ENCODE measurements at regions of chr1 and their contacts with region 1.

Region 1: GRCh38 chr1:175221666-175222175 is 29.1 kb upstream of the KIAA0040 start:
- DNase-seq: peak; percentile 29
- ATAC-seq: no peak
- H3K4me3 ChIP-seq: no peak overlapping the region
- H3K27ac ChIP-seq: no peak overlapping the region
- H3K4me1 ChIP-seq: peaks cover 53% of the 10 kb centered on the region
- H3K27me3 ChIP-seq: no peaks in the 10 kb centered on the region
- CTCF ChIP-seq: peak; percentile 26; the same call in 1 of the 2 replicates

Region 2: GRCh38 chr1:175154629-175155472 is 66.9 kb before region 1 on chr1:
- CTCF ChIA-PET with region 1: interaction called, 10 read pairs
- POLR2A ChIA-PET with region 1: no interaction called
- intact Hi-C with region 1: loop called (anchors 2 kb)
- DNase-seq: peak; percentile 82
- ATAC-seq: peak; percentile 16; the same call in 1 of the 2 replicates
- H3K4me3 ChIP-seq: no peak overlapping the region
- H3K27ac ChIP-seq: no peak overlapping the region
- H3K4me1 ChIP-seq: peaks cover 29% of the 10 kb centered on the region
- H3K27me3 ChIP-seq: no peaks in the 10 kb centered on the region
- CTCF ChIP-seq: peak; percentile 78

Region 3: GRCh38 chr1:175169305-175170018 is 52.3 kb before region 1 on chr1:
- CTCF ChIA-PET with region 1: no interaction called
- POLR2A ChIA-PET with region 1: no interaction called
- intact Hi-C with region 1: loop called (anchors 1 kb)
- DNase-seq: peak; percentile 88
- ATAC-seq: peak; percentile 92
- H3K4me3 ChIP-seq: peak overlapping the region; percentile 30; the same call in 1 of the 2 replicates
- H3K27ac ChIP-seq: peak overlapping the region; percentile 98
- H3K4me1 ChIP-seq: peaks cover 45% of the 10 kb centered on the region
- H3K27me3 ChIP-seq: no peaks in the 10 kb centered on the region
- CTCF ChIP-seq: no peak

Region 4: DNA sequence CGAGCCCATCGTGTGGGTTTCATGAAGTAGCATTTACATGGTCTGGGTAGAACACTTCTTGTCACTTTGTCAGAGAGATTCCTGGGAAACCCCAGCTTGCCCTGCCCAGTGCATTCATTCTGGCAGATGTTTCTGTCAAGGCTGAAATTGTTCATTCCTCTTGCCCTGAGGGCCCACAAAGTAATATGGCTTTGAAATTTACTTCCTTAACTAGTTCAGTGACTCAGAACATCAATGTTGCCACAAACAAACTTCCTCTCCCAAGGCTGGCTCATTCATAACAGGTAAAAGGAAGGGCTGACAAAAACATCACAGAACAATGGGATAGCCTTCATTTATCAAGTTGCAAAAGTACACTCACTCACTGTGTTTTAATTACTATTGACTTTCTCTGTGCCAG is 24.2 kb before region 1 on chr1:
- CTCF ChIA-PET with region 1: no interaction called
- POLR2A ChIA-PET with region 1: no interaction called
- intact Hi-C with region 1: loop called (anchors 1 kb)
- DNase-seq: peak; percentile 93
- ATAC-seq: peak; percentile 56
- H3K4me3 ChIP-seq: no peak overlapping the region
- H3K27ac ChIP-seq: peak overlapping the region; percentile 99
- H3K4me1 ChIP-seq: peaks cover 49% of the 10 kb centered on the region
- H3K27me3 ChIP-seq: no peaks in the 10 kb centered on the region
- CTCF ChIP-seq: no peak

Region 5: DNA sequence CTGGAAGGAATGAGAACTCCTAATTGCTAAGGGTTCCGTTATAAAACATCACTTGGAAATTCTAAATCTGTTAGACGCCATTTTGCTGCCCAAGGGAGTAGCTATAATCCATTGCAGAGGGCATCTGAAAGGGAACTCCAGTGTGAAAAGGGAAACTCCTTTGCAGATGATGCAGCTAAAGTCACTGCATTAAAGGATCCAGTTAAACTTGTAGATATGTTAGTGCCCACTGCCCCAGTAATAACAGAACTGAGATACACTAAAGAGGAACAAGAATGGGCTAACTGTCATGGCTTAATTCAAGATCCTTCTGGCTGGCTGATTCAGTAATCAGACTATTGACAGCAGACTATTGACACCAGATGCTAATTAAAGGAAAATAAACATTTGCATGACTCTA is 52.6 kb after region 1 on chr1:
- CTCF ChIA-PET with region 1: no interaction called
- POLR2A ChIA-PET with region 1: no interaction called
- intact Hi-C with region 1: loop called (anchors 10 kb)
- DNase-seq: no peak
- ATAC-seq: no peak
- H3K4me3 ChIP-seq: no peak overlapping the region
- H3K27ac ChIP-seq: no peak overlapping the region
- H3K4me1 ChIP-seq: peaks cover 6% of the 10 kb centered on the region
- H3K27me3 ChIP-seq: no peaks in the 10 kb centered on the region
- CTCF ChIP-seq: no peak

Region 6: DNA sequence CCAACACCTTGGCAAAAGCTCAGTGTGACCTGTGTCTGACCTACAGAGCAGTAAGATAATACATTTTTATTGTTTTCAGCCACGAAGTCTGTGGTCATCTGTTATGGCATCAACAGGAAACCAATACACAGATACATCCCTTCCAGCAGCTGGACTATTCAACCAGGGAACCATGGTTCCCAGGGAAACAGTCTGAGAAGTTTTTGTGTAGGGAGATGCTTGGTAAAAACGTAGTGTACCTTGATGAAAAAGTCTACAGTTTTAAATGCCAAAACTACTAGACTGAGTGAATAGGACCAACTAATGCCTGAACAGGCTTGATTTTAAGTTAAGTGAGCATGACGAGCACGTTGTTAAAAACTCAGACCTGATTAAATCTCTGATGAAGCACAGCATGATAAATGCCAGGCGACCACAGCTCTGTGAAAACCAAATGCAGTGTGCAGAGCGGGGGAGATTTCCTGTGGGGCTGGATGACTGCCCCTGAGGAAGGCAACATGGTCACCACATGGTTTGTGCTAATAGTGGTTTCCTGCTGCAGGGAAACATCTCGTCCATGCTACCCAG is 292.7 kb after region 1 on chr1:
- CTCF ChIA-PET with region 1: no interaction called
- POLR2A ChIA-PET with region 1: no interaction called
- intact Hi-C with region 1: no loop called
- DNase-seq: no peak
- ATAC-seq: no peak
- H3K4me3 ChIP-seq: no peak overlapping the region
- H3K27ac ChIP-seq: no peak overlapping the region
- H3K4me1 ChIP-seq: no peaks in the 10 kb centered on the region
- H3K27me3 ChIP-seq: no peaks in the 10 kb centered on the region
- CTCF ChIP-seq: no peak

Measured in PC-3 (cell line).